ENCODE measurements at regions of chr20 and their contacts with region 1.

Region 1: GRCh38 chr20:17460119-17460518 is 71.1 kb downstream of the BFSP1 start:
- DNase-seq: peak; percentile 4
- H3K4me3 ChIP-seq: no peak overlapping the region
- H3K27ac ChIP-seq: no peak overlapping the region
- H3K4me1 ChIP-seq: no peaks in the 10 kb centered on the region
- CTCF ChIP-seq: no peak

Region 2: GRCh38 chr20:18943542-18943941 is 1483.4 kb after region 1 on chr20:
- CTCF ChIA-PET with region 1: no interaction called
- POLR2A ChIA-PET with region 1: no interaction called
- intact Hi-C with region 1: loop called (anchors 10 kb)
- DNase-seq: no peak
- H3K4me3 ChIP-seq: no peak overlapping the region
- H3K27ac ChIP-seq: no peak overlapping the region
- H3K4me1 ChIP-seq: no peaks in the 10 kb centered on the region
- CTCF ChIP-seq: no peak